Adrenal gland (tissue), 19 donors: ENCODE measurements at regions of chr2 and their contacts with region 1.

Region 1: DNA sequence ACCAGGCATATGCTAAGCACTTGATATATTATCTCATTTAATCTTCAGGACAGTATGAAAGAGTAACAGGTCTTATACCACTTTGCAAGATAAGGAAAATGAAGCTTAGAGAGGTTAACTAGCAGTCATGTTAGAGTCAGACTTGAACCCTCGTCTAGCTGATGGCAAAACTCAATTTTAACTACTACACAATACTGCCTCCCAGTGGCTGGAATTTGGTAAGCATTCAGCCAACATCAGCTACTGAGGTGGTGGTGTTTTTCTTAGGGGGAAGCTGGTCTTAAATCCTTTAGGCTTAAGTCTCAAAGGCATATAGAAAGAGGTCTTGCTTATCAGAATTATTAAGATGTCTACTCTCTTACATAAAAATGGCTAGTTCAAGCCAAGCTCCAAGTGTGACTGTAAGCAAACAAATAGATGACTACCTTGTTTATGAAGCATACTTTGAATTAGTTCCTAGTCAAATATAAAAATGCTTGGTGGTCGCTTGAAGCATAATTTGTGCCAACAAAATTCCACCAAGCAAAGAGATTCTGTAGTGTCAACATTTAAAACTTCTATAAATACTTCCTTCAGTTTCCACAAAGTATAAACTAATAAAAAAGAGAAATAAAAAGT is 325.4 kb upstream of the FIGN start:
- DNase-seq: peak in 5 of 7 donors; percentile 23 to 70 (median 47)
- H3K4me3 ChIP-seq: no peak overlapping the region
- H3K27ac ChIP-seq: no peak overlapping the region
- H3K4me1 ChIP-seq: no peaks in the 10 kb centered on the region
- H3K27me3 ChIP-seq: no peaks in the 10 kb centered on the region
- CTCF ChIP-seq: peak; percentile 46 to 70 (median 64)
- POLR2A ChIP-seq: no peak

Region 2: GRCh38 chr2:163182764-163183354 is 878.4 kb before region 1 on chr2:
- intact Hi-C with region 1: loop called in 1 of 2 experiments (anchors 5 kb)
- DNase-seq: no peak
- H3K4me3 ChIP-seq: no peak overlapping the region
- H3K27ac ChIP-seq: no peak overlapping the region
- H3K4me1 ChIP-seq: no peaks in the 10 kb centered on the region
- H3K27me3 ChIP-seq: no peaks in the 10 kb centered on the region
- CTCF ChIP-seq: peak; percentile 33 to 63 (median 42)
- POLR2A ChIP-seq: no peak

Region 3: DNA sequence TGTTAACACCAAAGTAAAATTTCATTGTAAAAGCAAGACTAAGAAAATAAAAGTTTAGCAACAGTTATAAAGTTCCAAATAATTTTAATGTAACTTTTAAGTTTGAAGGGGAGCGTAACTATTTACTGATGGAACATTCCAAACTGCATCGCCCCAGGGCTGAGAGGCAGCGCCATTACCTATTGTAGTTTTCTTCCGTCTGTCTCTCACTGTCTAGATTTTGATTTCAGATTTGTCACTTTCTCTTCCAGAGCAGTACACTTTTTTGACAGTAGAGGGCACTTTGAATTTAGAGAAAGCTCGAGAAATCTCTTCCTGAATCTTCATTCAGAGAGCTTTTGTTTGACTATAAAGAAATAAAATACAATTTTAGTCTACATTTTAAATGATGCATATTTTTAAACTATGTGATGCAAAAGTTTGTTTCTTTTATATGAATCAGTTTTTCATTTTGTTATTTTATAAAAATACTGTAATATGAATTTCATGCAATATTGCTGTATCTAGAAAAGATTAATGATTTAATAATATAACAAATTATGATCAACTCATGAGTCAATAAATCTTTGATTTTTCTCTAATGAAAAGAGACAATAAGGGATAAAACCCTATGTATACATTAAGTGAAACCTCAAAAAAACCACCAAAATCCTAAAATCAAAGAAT is 715.2 kb before region 1 on chr2:
- intact Hi-C with region 1: loop called in 1 of 2 experiments (anchors 5 kb)
- DNase-seq: no peak
- H3K4me3 ChIP-seq: peak overlapping the region in 1 of 4 donors; percentile 6
- H3K27ac ChIP-seq: no peak overlapping the region
- H3K4me1 ChIP-seq: peaks cover 0 to 15% of the 10 kb centered on the region in 2 donors
- H3K27me3 ChIP-seq: no peaks in the 10 kb centered on the region
- CTCF ChIP-seq: peak; percentile 55 to 86 (median 65)
- POLR2A ChIP-seq: no peak

Region 4: GRCh38 chr2:163919719-163920118 is 141.5 kb before region 1 on chr2:
- intact Hi-C with region 1: no loop called
- DNase-seq: no peak
- H3K4me3 ChIP-seq: no peak overlapping the region
- H3K27ac ChIP-seq: no peak overlapping the region
- H3K4me1 ChIP-seq: no peaks in the 10 kb centered on the region
- H3K27me3 ChIP-seq: no peaks in the 10 kb centered on the region
- CTCF ChIP-seq: no peak
- POLR2A ChIP-seq: no peak

Region 5: DNA sequence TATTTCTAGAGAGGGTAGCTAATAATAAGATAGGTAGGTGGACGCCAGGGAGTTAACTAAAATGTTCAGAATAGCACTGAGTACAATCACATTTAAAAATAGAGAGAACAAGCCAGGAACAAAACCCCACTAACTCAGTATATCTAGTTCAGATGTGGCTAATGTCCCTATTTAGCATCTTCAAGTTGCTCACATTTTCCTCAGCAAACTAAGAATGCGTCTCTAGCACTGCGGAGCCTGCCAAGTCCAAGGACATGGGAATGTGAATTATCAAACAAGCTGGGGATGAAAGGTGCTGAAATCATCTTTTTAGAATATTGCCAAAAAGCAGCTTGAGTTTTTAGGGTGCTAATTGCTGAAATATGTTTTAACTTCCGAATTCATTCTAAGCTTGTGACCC is 73.1 kb after region 1 on chr2:
- intact Hi-C with region 1: no loop called
- DNase-seq: no peak
- H3K4me3 ChIP-seq: no peak overlapping the region
- H3K27ac ChIP-seq: no peak overlapping the region
- H3K4me1 ChIP-seq: no peaks in the 10 kb centered on the region
- H3K27me3 ChIP-seq: no peaks in the 10 kb centered on the region
- CTCF ChIP-seq: no peak
- POLR2A ChIP-seq: no peak

Region 6: DNA sequence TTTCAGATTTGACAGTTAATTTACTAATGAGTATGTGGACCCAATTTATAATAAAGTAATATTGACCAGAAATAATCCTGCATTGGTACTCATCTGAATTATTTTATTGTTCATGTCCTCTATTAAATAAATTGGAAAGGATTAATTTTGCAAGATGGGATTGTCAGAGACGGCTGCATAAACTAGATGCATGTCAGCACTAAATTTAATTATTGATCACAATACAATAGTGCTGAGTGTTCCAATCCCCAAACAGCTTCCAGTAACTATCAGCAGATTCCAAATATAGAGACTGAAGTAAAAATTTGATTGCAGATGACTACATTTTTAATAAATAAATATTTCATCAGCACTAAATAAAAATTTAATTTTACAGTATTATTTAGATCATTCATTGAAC is 172.8 kb after region 1 on chr2:
- intact Hi-C with region 1: no loop called
- DNase-seq: no peak
- H3K4me3 ChIP-seq: no peak overlapping the region
- H3K27ac ChIP-seq: no peak overlapping the region
- H3K4me1 ChIP-seq: no peaks in the 10 kb centered on the region
- H3K27me3 ChIP-seq: no peaks in the 10 kb centered on the region
- CTCF ChIP-seq: no peak
- POLR2A ChIP-seq: no peak